ENCODE measurements at regions of chr1 and their contacts with region 1.

Region 1: GRCh38 chr1:209354111-209354839 is 229.2 kb upstream of the CAMK1G start:
- H3K4me3 ChIP-seq: no peak overlapping the region
- H3K27ac ChIP-seq: no peak overlapping the region
- H3K4me1 ChIP-seq: no peaks in the 10 kb centered on the region
- CTCF ChIP-seq: peak; percentile 73; the same call in 1 of the 2 replicates

Region 2: GRCh38 chr1:209168204-209168603 is 186.1 kb before region 1 on chr1:
- CTCF ChIA-PET with region 1: no interaction called
- POLR2A ChIA-PET with region 1: no interaction called
- H3K4me3 ChIP-seq: no peak overlapping the region
- H3K27ac ChIP-seq: no peak overlapping the region
- H3K4me1 ChIP-seq: no peaks in the 10 kb centered on the region
- CTCF ChIP-seq: no peak

Region 3: DNA sequence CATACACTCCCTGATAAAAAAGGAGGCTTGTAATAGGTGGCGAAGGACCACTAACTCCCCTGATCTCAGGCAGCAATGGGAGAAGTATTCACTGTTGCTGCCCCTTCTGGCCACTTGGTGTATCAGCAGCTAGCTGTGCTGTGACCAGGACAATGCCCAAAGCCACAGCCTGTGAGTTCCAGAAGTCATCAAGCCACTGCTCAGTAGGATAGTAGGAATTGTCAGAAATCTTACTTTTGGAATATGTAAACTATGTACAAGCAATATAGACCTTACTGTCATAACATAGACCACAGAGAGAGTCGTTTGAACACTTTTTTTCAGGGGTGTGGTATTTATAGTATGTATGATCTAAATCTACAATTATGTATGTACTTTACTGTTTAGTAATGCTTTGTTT is 19.1 kb before region 1 on chr1:
- CTCF ChIA-PET with region 1: interaction called, 39 read pairs
- POLR2A ChIA-PET with region 1: no interaction called
- H3K4me3 ChIP-seq: no peak overlapping the region
- H3K27ac ChIP-seq: no peak overlapping the region
- H3K4me1 ChIP-seq: no peaks in the 10 kb centered on the region
- CTCF ChIP-seq: peak; percentile 50

Region 4: DNA sequence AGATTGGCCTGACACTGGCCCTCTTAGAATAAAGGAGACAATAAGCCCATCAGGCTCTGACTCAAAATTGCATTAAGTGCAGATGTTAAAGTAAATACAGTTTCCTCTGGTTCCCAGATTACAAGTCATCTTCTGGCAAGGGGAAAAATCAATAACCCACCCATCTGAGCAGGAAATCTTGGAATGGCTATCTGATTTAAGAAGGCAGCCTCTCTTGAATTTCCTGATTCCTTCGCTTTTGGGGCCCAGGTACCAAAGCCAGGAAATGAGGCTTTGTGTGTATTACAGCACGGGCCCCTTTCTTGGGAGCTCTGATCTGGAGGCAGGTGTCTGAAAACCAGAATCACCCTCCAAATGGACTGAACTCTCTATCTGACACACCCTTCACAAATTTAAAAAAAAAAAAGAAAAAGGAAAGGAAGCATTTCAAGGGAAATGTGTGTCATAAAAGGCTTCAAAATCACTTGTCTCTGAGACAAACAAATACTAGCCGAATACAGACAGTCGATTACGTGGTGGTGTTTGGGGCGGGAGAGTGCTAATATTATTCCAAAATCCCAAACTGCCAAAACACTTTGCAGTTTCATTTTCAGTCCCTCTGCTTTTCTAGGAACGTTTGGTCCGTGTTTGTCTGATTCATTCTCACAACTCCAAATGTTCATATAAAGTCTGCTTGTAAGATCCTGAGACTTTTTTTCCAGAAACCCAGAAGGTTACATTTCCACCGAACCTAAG is 11.7 kb before region 1 on chr1:
- CTCF ChIA-PET with region 1: interaction called, 39 read pairs
- POLR2A ChIA-PET with region 1: no interaction called
- H3K4me3 ChIP-seq: no peak overlapping the region
- H3K27ac ChIP-seq: no peak overlapping the region
- H3K4me1 ChIP-seq: no peaks in the 10 kb centered on the region
- CTCF ChIP-seq: no peak

Region 5: GRCh38 chr1:209368864-209369598 is 14.8 kb after region 1 on chr1:
- CTCF ChIA-PET with region 1: interaction called, 23 read pairs
- POLR2A ChIA-PET with region 1: no interaction called
- H3K4me3 ChIP-seq: no peak overlapping the region
- H3K27ac ChIP-seq: no peak overlapping the region
- H3K4me1 ChIP-seq: no peaks in the 10 kb centered on the region
- CTCF ChIP-seq: no peak

Measured in HEK293 (cell line).